ENCODE measurements at regions of chr10 and their contacts with region 1.

Region 1: DNA sequence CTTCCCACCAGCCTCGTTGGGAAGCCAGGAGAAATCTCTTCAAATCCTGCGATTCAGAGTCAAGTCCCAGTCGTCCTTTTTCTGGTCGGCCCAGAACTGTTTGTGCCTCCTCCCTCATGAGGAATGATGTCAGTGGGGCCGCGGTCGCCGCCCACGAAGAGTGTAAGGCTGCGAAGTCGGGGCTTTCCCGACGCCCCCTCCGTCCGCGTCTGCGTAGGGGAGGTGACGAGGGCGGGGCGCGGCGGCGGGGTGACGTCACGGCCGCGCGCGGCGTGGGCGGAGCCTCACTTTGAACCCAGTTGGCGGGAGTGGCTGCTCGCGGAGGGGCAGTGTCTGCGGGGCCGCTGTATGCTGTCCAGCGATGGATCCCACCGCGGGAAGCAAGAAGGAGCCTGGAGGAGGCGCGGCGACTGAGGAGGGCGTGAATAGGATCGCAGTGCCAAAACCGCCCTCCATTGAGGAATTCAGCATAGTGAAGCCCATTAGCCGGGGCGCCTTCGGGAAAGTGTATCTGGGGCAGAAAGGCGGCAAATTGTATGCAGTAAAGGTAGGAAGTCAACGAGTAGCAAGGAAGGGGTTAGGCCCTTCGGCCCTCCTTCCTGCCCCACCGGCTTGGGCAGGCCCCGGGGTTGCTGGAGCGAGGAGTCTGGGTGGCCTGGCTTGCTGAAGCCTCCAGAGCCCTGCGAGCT is at the start of gene MASTL:
- DNase-seq: peak; percentile 93 to 97 (median 96)
- ATAC-seq: peak; percentile 89
- H3K4me3 ChIP-seq: peak within 1 kb of the TSS; percentile 90
- H3K4me3 Mint-ChIP-seq: peak within 1 kb of the TSS; percentile 91 to 100 (median 99)
- H3K27ac ChIP-seq: peak within 1 kb of the TSS; percentile 99
- H3K27ac Mint-ChIP-seq: peak within 1 kb of the TSS; percentile 100
- H3K4me1 ChIP-seq: peaks cover 13 to 17% of the 10 kb centered on the region in 2 donors
- H3K4me1 Mint-ChIP-seq: peaks cover 34 to 60% (median 50%) of the 10 kb centered on the region in 7 donors
- H3K27me3 ChIP-seq: no peaks in the 10 kb centered on the region
- H3K27me3 Mint-ChIP-seq: peaks cover 0 to 2% (median 0%) of the 10 kb centered on the region in 5 donors
- total RNA-seq, gene MASTL: 8.4 to 29.0 (median 20.2) TPM

Region 2: DNA sequence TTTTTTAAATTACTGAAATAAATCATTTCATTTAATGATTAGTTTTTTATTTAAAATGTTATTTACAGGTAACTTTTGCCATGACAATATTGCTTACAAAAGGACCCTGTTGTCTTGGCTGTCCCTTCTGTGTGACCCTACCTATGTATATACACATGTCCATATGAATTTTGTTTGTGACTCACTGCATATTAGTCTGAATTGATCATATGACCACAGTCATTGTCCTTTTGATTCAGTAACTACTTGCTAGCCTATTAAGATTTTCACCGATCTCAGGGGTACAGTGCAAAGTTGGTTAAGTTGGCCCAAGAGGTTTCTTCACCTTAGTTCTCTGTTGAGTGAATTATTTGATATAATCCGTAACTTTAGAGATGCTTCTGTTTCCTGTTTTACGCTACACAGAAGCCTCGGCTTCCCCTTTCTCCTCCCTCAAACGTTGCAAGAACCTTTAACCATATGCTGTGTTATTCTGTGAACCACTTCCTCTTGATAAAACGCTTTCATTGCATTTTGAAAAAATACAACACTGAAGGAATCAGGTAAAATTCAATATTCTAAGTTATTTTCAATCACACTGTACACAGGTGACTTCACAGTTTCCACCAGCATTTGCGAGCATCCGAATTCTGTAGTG is 673.2 kb before region 1 on chr10:
- CTCF ChIA-PET with region 1: no interaction called
- POLR2A ChIA-PET with region 1: no interaction called
- intact Hi-C with region 1: loop called (anchors 1 to 2 kb)
- DNase-seq: peak in 7 of 9 donors; percentile 65 to 90 (median 84)
- ATAC-seq: peak; percentile 91
- H3K4me3 ChIP-seq: peak overlapping the region; percentile 46
- H3K4me3 Mint-ChIP-seq: peak overlapping the region; percentile 68 to 88 (median 76)
- H3K27ac ChIP-seq: peak overlapping the region; percentile 71
- H3K27ac Mint-ChIP-seq: peak overlapping the region; percentile 85 to 97 (median 95)
- H3K4me1 ChIP-seq: peaks cover 81 to 85% of the 10 kb centered on the region in 2 donors
- H3K4me1 Mint-ChIP-seq: peaks cover 60 to 85% (median 79%) of the 10 kb centered on the region in 7 donors
- H3K27me3 ChIP-seq: no peaks in the 10 kb centered on the region
- H3K27me3 Mint-ChIP-seq: no peaks in the 10 kb centered on the region

Region 3: GRCh38 chr10:26697163-26697921 is 457.9 kb before region 1 on chr10 and contains the start of gene PDSS1:
- CTCF ChIA-PET with region 1: no interaction called
- POLR2A ChIA-PET with region 1: interaction called, 3 read pairs
- intact Hi-C with region 1: loop called (anchors 1 to 2 kb)
- DNase-seq: peak; percentile 34 to 77 (median 60)
- ATAC-seq: peak; percentile 77
- H3K4me3 ChIP-seq: peak within 1 kb of the TSS; percentile 77
- H3K4me3 Mint-ChIP-seq: peak within 1 kb of the TSS; percentile 92 to 100 (median 98)
- H3K27ac ChIP-seq: peak within 1 kb of the TSS; percentile 85
- H3K27ac Mint-ChIP-seq: peak within 1 kb of the TSS; percentile 94 to 99 (median 97)
- H3K4me1 ChIP-seq: peaks cover 7 to 17% of the 10 kb centered on the region in 2 donors
- H3K4me1 Mint-ChIP-seq: peaks cover 28 to 47% (median 34%) of the 10 kb centered on the region in 7 donors
- H3K27me3 ChIP-seq: no peaks in the 10 kb centered on the region
- H3K27me3 Mint-ChIP-seq: no peaks in the 10 kb centered on the region
- total RNA-seq, gene PDSS1: 3.8 to 15.2 (median 4.7) TPM

Region 4: DNA sequence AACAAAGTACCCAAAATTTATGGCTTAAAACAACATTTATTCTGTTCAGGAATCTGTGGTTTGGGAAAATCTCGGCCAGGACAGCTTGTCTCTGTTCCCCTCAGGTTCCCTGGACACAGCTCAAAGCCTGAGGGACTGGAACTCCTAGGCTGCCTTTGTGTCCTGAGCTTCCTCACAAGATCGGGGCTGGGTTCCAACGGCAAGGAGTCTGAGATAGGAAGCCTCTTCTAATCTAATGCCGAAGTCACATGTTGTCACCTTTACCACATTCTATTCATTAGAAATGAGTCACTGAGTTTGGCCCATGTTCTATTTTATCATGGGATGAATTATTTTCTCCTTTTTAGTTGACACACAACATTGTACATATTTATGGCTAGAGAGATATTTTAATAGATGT is 135.4 kb before region 1 on chr10:
- CTCF ChIA-PET with region 1: no interaction called
- POLR2A ChIA-PET with region 1: interaction called, 5 read pairs
- intact Hi-C with region 1: loop called in 1 of 2 experiments (anchors 5 kb)
- DNase-seq: no peak
- ATAC-seq: no peak
- H3K4me3 ChIP-seq: no peak overlapping the region
- H3K4me3 Mint-ChIP-seq: no peak overlapping the region
- H3K27ac ChIP-seq: no peak overlapping the region
- H3K27ac Mint-ChIP-seq: peak overlapping the region in 1 of 9 donors; percentile 76
- H3K4me1 ChIP-seq: peaks cover 0 to 12% of the 10 kb centered on the region in 2 donors
- H3K4me1 Mint-ChIP-seq: peaks cover 0 to 26% (median 20%) of the 10 kb centered on the region in 7 donors
- H3K27me3 ChIP-seq: no peaks in the 10 kb centered on the region
- H3K27me3 Mint-ChIP-seq: no peaks in the 10 kb centered on the region

Region 5: DNA sequence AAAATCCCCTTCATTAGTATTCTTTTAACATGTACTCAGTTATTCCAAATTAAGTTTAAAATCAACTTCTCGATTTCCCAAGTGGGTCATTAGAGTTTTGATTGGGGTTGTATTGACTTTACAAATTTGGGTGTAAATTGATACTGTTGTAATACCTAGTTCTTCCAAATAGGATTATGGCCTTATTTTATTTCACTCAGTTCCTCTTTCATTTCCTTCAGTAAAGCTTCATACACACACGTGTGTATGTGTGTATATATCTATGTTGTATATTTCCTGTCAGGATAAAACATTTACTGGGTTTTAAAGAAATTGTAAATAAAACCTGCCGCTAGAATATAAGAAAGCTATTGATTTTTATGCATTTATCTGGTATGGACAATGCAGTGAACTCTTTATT is 16.9 kb before region 1 on chr10:
- CTCF ChIA-PET with region 1: no interaction called
- POLR2A ChIA-PET with region 1: interaction called, 5 read pairs
- intact Hi-C with region 1: loop called in 1 of 2 experiments (anchors 2 kb)
- DNase-seq: no peak
- ATAC-seq: no peak
- H3K4me3 ChIP-seq: no peak overlapping the region
- H3K4me3 Mint-ChIP-seq: no peak overlapping the region
- H3K27ac ChIP-seq: no peak overlapping the region
- H3K27ac Mint-ChIP-seq: peak overlapping the region in 3 of 9 donors; percentile 14 to 16 (median 15)
- H3K4me1 ChIP-seq: no peaks in the 10 kb centered on the region
- H3K4me1 Mint-ChIP-seq: peaks cover 0 to 12% (median 4%) of the 10 kb centered on the region in 7 donors
- H3K27me3 ChIP-seq: no peaks in the 10 kb centered on the region
- H3K27me3 Mint-ChIP-seq: no peaks in the 10 kb centered on the region

Region 6: GRCh38 chr10:28367929-28368484 is 1212.8 kb after region 1 on chr10:
- CTCF ChIA-PET with region 1: no interaction called
- POLR2A ChIA-PET with region 1: interaction called, 3 read pairs
- intact Hi-C with region 1: loop called in 1 of 2 experiments (anchors 1 kb)
- DNase-seq: peak in 8 of 9 donors; percentile 54 to 88 (median 83)
- ATAC-seq: peak; percentile 97
- H3K4me3 ChIP-seq: peak overlapping the region; percentile 18
- H3K4me3 Mint-ChIP-seq: peak overlapping the region; percentile 63 to 93 (median 76)
- H3K27ac ChIP-seq: peak overlapping the region; percentile 78
- H3K27ac Mint-ChIP-seq: peak overlapping the region; percentile 90 to 99 (median 96)
- H3K4me1 ChIP-seq: peaks cover 44 to 54% of the 10 kb centered on the region in 2 donors
- H3K4me1 Mint-ChIP-seq: peaks cover 39 to 80% (median 60%) of the 10 kb centered on the region in 7 donors
- H3K27me3 ChIP-seq: no peaks in the 10 kb centered on the region
- H3K27me3 Mint-ChIP-seq: peaks cover 0 to 5% (median 0%) of the 10 kb centered on the region in 5 donors